ENCODE measurements at regions of chr11 and their contacts with region 1.

Region 1: GRCh38 chr11:61792310-61793085 is at the starts of genes FEN1 and TMEM258:
- DNase-seq: peak; percentile 88
- H3K4me3 ChIP-seq: peak within 1 kb of the TSS; percentile 95 to 98
- H3K27ac ChIP-seq: peak within 1 kb of the TSS; percentile 99 to 100
- H3K4me1 ChIP-seq: peaks cover 5 to 19% of the 10 kb centered on the region in 2 experiments; a peak in 3 of 4 replicates
- H3K27me3 ChIP-seq: no peaks in the 10 kb centered on the region
- CTCF ChIP-seq: no peak
- EP300 ChIP-seq: no peak
- RAD21 ChIP-seq: no peak
- polyA plus RNA-seq, gene FEN1: 35.9 and 39.5 TPM in 2 replicates
- polyA plus RNA-seq, gene TMEM258: 454 and 617 TPM in 2 replicates

Region 2: DNA sequence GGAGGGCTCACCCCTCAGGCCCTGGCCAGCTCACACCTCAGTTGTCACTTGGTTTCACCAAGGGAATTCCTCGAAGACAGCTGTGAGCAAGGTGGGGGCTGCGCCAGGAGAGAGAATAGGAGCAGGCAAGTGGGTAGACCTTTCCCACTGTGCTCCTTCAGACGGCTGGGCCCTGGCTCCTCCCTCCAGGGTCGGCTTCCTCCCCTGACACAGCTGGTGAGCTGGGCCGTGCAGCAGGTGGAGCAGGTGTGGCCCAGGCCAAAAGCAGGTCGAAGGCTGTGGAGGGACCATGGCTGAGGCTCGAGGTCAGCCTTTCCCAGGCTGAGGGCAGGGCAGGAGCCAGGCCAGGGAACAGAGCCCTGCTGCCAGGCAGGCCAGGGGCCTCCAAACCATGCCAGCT is 52.5 kb before region 1 on chr11:
- CTCF ChIA-PET with region 1: interaction called, 285 read pairs
- POLR2A ChIA-PET with region 1: interaction called, 3 read pairs
- DNase-seq: no peak
- H3K4me3 ChIP-seq: no peak overlapping the region
- H3K27ac ChIP-seq: no peak overlapping the region
- H3K4me1 ChIP-seq: no peaks in the 10 kb centered on the region
- H3K27me3 ChIP-seq: no peaks in the 10 kb centered on the region
- CTCF ChIP-seq: no peak
- EP300 ChIP-seq: no peak
- RAD21 ChIP-seq: no peak

Region 3: GRCh38 chr11:61764606-61765260 is 27.8 kb before region 1 on chr11:
- CTCF ChIA-PET with region 1: interaction called, 81 read pairs
- POLR2A ChIA-PET with region 1: interaction called, 4 read pairs
- DNase-seq: peak; percentile 88
- H3K4me3 ChIP-seq: no peak overlapping the region
- H3K27ac ChIP-seq: no peak overlapping the region; a peak in 1 of 4 replicates
- H3K4me1 ChIP-seq: peaks cover 0 to 30% of the 10 kb centered on the region in 2 experiments; a peak in 2 of 4 replicates
- H3K27me3 ChIP-seq: no peaks in the 10 kb centered on the region
- CTCF ChIP-seq: no peak
- EP300 ChIP-seq: no peak
- RAD21 ChIP-seq: 0 out of 2 replicates have a peak, but pooled peaks have one; percentile 6

Region 4: DNA sequence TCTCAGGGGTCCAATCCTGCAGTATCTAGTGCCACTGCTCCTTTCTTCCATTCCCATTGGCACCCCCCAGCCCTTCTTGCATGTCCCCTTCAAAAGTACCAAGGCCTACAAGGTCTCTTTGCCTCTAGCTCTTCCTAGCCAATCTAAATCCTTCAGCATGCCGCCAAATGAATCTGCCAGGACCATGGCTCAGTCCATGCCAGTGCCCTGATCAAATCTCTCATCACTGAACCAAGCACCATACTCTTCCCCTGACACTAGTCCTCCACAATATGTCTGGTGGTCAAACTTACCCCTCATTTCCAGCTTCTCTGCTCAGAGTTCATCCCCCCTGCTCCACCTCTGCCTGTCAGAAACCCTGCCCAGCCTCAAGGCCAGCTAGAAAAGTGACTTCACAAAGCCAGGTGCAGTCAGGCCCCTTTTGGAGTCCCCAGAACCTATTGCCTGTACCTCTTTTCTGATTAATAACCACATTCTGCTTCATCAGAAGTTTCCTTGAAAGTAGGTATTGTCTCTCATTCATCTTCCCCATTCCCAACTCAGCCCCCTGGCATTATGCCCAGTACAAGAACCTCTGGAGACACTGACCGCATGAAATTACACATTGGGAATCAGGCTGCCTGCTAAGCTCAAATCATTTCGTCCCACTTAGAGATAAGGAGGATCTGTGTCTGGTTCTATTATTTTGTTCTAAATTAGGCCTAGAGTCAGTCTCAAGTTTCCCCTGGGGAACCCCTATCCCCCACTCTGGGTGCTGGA is 11.6 kb after region 1 on chr11:
- CTCF ChIA-PET with region 1: interaction called, 21 read pairs
- POLR2A ChIA-PET with region 1: interaction called, 7 read pairs
- DNase-seq: no peak
- H3K4me3 ChIP-seq: no peak overlapping the region
- H3K27ac ChIP-seq: no peak overlapping the region
- H3K4me1 ChIP-seq: no peaks in the 10 kb centered on the region
- H3K27me3 ChIP-seq: no peaks in the 10 kb centered on the region
- CTCF ChIP-seq: no peak
- EP300 ChIP-seq: no peak
- RAD21 ChIP-seq: no peak

Region 5: DNA sequence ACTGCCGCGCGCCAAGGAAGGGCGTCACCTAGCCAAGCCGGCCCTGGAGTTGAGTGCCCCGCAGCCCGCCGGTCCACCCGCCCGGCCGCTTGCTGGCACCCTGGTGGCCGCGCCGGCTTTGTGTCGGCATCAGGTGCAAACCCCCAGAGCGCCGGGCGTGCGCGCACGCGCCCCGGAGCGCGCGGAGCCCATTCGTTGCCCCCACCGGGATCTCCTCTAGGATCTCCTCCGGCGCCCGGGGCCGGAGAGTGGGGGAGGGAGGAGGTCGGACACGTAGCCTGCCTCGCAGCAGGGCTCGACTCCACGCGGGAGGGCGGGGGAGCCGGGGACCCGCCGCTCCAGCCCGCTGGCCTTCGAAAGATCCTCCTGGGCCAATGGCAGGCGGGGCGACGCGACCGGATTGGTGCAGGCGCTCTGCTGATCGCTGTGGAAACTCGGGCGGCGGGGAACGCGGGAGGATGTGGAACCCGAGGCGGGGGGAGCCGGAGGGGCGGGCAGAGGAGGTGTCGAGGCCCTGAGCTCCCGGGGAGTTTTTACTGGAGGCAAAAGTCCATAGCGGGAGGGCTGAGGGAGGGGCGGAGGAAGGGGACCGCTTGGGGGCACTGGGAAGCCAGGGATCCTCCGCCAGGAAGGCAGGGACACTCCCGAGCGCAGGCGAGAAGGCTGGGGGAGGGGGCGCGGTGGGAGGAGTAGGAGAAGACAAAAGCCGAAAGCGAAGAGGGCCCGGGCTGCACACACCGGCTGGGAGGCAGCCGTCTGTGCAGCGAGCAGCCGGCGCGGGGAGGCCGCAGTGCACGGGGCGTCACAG is 35.3 kb after region 1 on chr11 and contains the start of gene FADS2:
- CTCF ChIA-PET with region 1: interaction called, 9 read pairs
- POLR2A ChIA-PET with region 1: interaction called, 14 read pairs
- DNase-seq: peak; percentile 93
- H3K4me3 ChIP-seq: peak within 1 kb of the TSS; percentile 70 to 96
- H3K27ac ChIP-seq: peak within 1 kb of the TSS; percentile 21 to 99
- H3K4me1 ChIP-seq: peaks cover 10 to 46% of the 10 kb centered on the region in 2 experiments; a peak in 3 of 4 replicates
- H3K27me3 ChIP-seq: no peaks in the 10 kb centered on the region
- CTCF ChIP-seq: no peak
- EP300 ChIP-seq: peak; percentile 16 to 32; a peak in 2 of 4 replicates
- RAD21 ChIP-seq: no peak
- polyA plus RNA-seq, gene FADS2: 67.8 and 77.1 TPM in 2 replicates

Region 6: DNA sequence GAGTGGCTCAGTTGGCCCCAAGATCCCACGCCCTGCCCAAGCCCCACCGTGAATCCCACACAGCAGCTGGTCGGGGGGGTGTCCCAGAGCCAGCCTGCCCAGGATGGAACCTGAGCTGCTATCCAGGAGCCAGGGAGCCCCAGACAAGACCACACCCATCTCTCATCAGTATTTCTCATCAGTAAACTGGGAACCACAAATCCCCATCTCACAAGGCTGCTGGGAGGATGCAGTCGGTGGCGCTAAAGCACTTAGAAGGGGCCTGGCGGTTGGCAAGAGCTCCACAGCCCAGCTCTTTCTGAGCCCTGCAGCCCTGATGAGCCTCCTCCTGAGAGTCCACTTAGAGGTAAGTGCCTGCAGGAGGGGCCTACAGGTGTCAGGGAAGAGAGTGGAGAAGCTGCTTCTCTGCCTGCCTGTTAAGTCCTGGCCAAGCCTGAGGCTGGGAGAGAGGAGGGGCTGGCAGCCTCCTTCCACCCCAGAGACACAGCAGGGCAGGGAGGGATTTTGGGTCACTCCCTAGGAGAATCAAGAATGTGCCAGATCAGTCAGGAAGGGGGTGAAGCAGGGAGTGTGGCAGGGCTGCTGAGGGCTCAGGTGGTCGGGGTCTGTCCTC is 92.8 kb after region 1 on chr11:
- CTCF ChIA-PET with region 1: interaction called, 11 read pairs
- POLR2A ChIA-PET with region 1: no interaction called
- DNase-seq: no peak
- H3K4me3 ChIP-seq: no peak overlapping the region
- H3K27ac ChIP-seq: no peak overlapping the region
- H3K4me1 ChIP-seq: peaks cover 7 to 11% of the 10 kb centered on the region in 2 experiments; a peak in 3 of 4 replicates
- H3K27me3 ChIP-seq: no peaks in the 10 kb centered on the region
- CTCF ChIP-seq: no peak
- EP300 ChIP-seq: no peak
- RAD21 ChIP-seq: no peak

Region 7: GRCh38 chr11:62116458-62116857 is 324.0 kb after region 1 on chr11:
- CTCF ChIA-PET with region 1: interaction called, 19 read pairs
- POLR2A ChIA-PET with region 1: no interaction called
- DNase-seq: no peak
- H3K4me3 ChIP-seq: no peak overlapping the region
- H3K27ac ChIP-seq: no peak overlapping the region
- H3K4me1 ChIP-seq: no peaks in the 10 kb centered on the region
- H3K27me3 ChIP-seq: no peaks in the 10 kb centered on the region
- CTCF ChIP-seq: no peak
- EP300 ChIP-seq: no peak
- RAD21 ChIP-seq: no peak